Left colon (tissue), 2 donors: ENCODE measurements at regions of chr10 and their contacts with region 1.

Region 1: GRCh38 chr10:49407552-49408137 is 11.8 kb upstream of the DRGX start:
- DNase-seq: peak; percentile 53 to 87
- ATAC-seq: peak; percentile 91

Region 2: DNA sequence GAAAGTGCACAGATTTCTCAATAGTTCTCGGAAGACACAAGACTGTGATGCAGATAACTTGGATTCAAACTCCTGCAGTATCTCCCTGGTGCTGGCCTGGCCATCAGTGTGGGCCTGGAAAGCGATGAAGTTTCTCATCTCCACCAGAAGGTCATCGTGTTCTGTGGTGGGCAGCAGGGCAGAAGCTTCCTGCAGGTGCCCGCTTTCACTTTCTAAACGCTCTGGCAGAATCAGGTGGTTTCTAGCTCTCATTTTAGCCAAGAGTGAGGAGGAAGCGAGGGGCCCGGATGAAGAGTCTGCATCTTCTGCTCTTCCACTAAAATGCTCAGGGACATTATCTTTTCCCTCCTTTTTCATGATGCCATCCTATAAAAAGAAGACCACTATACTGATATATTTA is 51.2 kb after region 1 on chr10:
- intact Hi-C with region 1: no loop called
- DNase-seq: no peak
- ATAC-seq: no peak

Region 3: DNA sequence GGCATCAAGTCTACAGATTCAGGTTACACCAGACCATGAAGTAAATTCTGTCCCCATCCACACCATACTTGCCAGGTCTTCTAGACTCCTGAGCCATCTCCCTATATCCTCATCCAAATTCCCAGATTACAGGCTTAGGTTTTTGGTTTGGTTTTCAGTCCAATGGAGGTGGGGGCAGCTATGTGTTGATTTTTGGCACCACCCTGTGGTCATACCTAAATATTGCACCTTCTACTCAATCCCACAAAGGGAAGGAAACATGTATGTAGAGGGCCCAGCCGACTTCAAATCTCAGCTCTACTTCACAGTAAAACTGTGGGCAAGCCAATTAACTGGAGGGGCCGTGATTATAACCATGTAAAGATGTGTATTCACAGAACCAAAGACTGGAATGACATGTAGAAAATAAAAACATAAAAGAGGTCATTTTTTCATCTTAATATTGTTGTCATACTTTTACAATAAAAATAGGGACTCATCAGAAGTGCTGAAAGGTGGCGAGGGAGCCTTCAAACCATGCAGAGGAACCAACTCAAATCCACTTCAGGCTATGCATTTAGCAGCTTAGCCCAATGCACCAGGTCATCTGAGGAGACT is 111.4 kb after region 1 on chr10:
- intact Hi-C with region 1: loop called in 1 of 2 experiments (anchors 10 kb)
- DNase-seq: no peak
- ATAC-seq: peak; percentile 74